ENCODE measurements at regions of chr1 and their contacts with region 1.

Region 1: GRCh38 chr1:179121159-179121938 is 39.5 kb downstream of the TOR3A start:
- DNase-seq: no peak
- H3K4me3 ChIP-seq: no peak overlapping the region
- H3K27ac ChIP-seq: no peak overlapping the region
- H3K27me3 ChIP-seq: no peaks in the 10 kb centered on the region
- CTCF ChIP-seq: peak; percentile 72

Region 2: GRCh38 chr1:179105350-179105749 is 16.0 kb before region 1 on chr1:
- CTCF ChIA-PET with region 1: interaction called, 18 read pairs
- POLR2A ChIA-PET with region 1: no interaction called
- DNase-seq: no peak
- H3K4me3 ChIP-seq: no peak overlapping the region
- H3K27ac ChIP-seq: no peak overlapping the region
- H3K27me3 ChIP-seq: no peaks in the 10 kb centered on the region
- CTCF ChIP-seq: peak; percentile 50

Region 3: GRCh38 chr1:179164494-179164893 is 43.1 kb after region 1 on chr1:
- CTCF ChIA-PET with region 1: interaction called, 11 read pairs
- POLR2A ChIA-PET with region 1: no interaction called
- DNase-seq: peak; percentile 69
- H3K4me3 ChIP-seq: no peak overlapping the region
- H3K27ac ChIP-seq: no peak overlapping the region
- H3K27me3 ChIP-seq: no peaks in the 10 kb centered on the region
- CTCF ChIP-seq: no peak

Region 4: GRCh38 chr1:179194068-179194537 is 72.8 kb after region 1 on chr1:
- CTCF ChIA-PET with region 1: interaction called, 13 read pairs
- POLR2A ChIA-PET with region 1: no interaction called
- DNase-seq: no peak
- H3K4me3 ChIP-seq: no peak overlapping the region
- H3K27ac ChIP-seq: no peak overlapping the region
- H3K27me3 ChIP-seq: no peaks in the 10 kb centered on the region
- CTCF ChIP-seq: no peak

Region 5: DNA sequence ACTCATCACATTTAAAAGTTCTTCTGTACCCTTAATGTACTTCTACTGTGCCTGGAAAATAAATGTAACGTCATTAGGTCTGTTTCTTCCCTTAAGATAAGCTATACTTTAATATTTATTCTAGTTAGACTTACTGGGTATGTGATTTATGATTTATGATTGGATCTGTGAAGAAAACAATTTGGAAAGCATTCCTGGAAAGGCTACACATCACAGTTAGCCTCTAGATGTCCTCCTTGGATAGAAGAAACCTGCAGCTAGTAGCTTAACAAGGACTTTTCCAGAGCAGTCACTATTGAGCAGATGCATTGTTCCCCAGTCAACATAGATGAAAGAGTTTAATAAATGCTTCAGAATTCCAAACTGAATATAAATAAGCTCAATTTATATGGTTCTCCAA is 130.3 kb after region 1 on chr1:
- CTCF ChIA-PET with region 1: interaction called, 12 read pairs
- POLR2A ChIA-PET with region 1: no interaction called
- DNase-seq: no peak
- H3K4me3 ChIP-seq: no peak overlapping the region
- H3K27ac ChIP-seq: no peak overlapping the region
- H3K27me3 ChIP-seq: no peaks in the 10 kb centered on the region
- CTCF ChIP-seq: peak; percentile 53

Region 6: GRCh38 chr1:179365320-179366092 is 244.2 kb after region 1 on chr1 and contains the start of gene AXDND1:
- CTCF ChIA-PET with region 1: interaction called, 15 read pairs
- POLR2A ChIA-PET with region 1: no interaction called
- DNase-seq: peak; percentile 52
- H3K4me3 ChIP-seq: peak within 1 kb of the TSS; percentile 80
- H3K27ac ChIP-seq: peak within 1 kb of the TSS; percentile 97
- H3K27me3 ChIP-seq: no peaks in the 10 kb centered on the region
- CTCF ChIP-seq: peak; percentile 38
- polyA plus RNA-seq, gene AXDND1: 0.27 TPM in 1 of 2 replicates, not detected in the other

Measured in AG04450 (cell line).